ENCODE measurements at regions of chrX and their contacts with region 1.

Region 1: DNA sequence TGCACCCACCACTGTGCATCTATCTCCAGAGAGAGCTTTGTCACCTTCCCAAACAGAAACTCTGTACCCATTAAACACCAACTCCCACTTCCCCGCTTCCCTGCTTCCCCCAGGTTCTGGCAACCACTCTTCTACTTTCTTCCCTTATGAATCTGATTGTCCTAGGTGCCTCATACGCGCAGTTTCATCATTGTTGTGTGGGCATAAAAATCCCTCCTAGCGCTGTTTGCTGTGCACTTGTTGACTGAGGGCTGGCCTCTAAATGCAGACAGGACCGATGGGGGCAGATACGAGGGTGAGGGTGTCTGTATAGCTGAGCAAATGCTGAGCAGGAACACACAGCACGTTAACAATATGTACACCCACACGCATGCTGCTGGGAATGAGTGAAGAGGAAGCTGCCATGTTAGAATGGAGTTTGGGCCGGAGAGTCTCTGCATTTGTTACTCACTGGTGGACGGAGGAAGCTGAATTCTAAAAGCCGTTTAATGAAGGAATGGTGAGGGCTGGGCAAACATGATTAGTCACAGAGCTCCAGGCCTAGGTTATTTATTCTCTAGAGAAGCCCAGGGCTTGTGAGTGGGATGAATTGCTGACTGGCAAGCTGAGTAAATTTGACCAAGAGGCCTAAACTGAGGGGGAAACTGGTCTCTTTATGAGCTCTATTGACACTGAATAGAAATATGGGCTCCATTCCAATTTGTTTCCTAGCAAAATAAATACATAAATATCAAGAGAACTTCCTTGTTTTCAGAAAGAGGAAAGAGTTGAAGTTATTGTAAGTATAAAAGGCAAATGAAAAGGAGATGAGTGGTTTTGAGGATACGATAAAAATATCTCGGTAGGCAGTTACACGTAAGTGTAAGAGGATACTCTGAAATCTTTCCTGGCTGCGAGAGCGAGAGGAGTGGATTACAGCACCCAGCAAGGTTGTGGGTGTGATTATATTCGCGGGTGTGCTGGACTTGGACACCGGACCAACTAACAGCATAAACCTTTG is 95.9 kb upstream of the RPS6KA3 start:
- DNase-seq: peak; percentile 93
- ATAC-seq: peak; percentile 90
- H3K4me3 ChIP-seq: peak overlapping the region; percentile 43 to 64 (median 45)
- H3K27ac ChIP-seq: peak overlapping the region; percentile 98
- H3K4me1 ChIP-seq: peaks cover 51% of the 10 kb centered on the region
- H3K27me3 ChIP-seq: no peaks in the 10 kb centered on the region
- CTCF ChIP-seq: no peak
- EP300 ChIP-seq: peak in 1 of 2 experiments; percentile 85; a peak in 3 of 4 replicates
- POLR2A ChIP-seq: peak; percentile 57 to 63; a peak in 2 of 4 replicates
- RAD21 ChIP-seq: no peak

Region 2: GRCh38 chrX:20252381-20253231 is 110.0 kb before region 1 on chrX:
- CTCF ChIA-PET with region 1: no interaction called
- POLR2A ChIA-PET with region 1: interaction called, 15 read pairs
- in situ Hi-C with region 1: no loop called
- intact Hi-C with region 1: no loop called
- DNase-seq: peak; percentile 35
- ATAC-seq: peak; percentile 60
- H3K4me3 ChIP-seq: no peak overlapping the region
- H3K27ac ChIP-seq: peak overlapping the region; percentile 35
- H3K4me1 ChIP-seq: peaks cover 91% of the 10 kb centered on the region
- H3K27me3 ChIP-seq: no peaks in the 10 kb centered on the region
- CTCF ChIP-seq: peak; percentile 59
- EP300 ChIP-seq: no peak
- POLR2A ChIP-seq: peak in 1 of 2 experiments; percentile 7; a peak in 2 of 4 replicates
- RAD21 ChIP-seq: peak; percentile 51; the same call in 1 of the 2 replicates

Region 3: DNA sequence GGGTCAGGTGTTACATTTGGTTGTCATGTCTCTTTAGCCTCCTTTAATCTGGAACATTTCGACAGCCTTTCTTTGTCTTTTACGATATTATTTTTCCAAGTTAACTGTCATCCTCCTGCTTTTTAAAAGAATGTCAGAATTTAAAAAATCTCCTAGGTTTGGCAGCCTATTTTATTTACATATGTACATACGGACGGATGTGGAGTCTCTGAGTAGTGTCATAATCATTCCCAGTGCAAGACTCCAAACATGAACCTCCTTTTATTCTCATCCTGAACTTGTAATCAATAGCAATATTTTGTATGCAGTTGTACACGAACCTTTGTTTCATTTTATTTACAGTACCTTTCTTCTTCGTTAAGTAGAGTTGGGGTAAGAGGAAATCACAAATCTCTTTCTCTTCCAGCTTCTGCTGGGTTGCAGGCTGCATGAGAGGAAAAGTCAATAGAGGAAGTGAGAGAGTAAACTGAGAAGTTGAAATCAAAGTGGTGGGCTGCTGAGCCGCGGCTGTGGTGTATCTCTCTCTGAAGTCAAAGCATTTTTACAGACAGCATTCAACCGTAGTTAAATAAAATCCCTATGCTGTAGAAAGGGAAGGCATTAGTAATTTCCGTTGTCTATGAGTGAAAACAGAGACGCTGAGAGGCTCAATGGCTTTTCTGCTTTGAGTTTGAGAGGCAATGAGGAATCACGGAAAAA is 42.0 kb before region 1 on chrX:
- CTCF ChIA-PET with region 1: no interaction called
- POLR2A ChIA-PET with region 1: interaction called, 15 read pairs
- in situ Hi-C with region 1: no loop called
- intact Hi-C with region 1: loop called (anchors 2 kb)
- DNase-seq: peak; percentile 90
- ATAC-seq: peak; percentile 96
- H3K4me3 ChIP-seq: peak overlapping the region in 2 of 3 experiments; percentile 24 to 28; a peak in 2 of 6 replicates
- H3K27ac ChIP-seq: peak overlapping the region; percentile 79
- H3K4me1 ChIP-seq: peaks cover 66% of the 10 kb centered on the region
- H3K27me3 ChIP-seq: no peaks in the 10 kb centered on the region
- CTCF ChIP-seq: no peak
- EP300 ChIP-seq: peak in 1 of 2 experiments; percentile 92; a peak in 2 of 4 replicates
- POLR2A ChIP-seq: no peak
- RAD21 ChIP-seq: no peak

Region 4: GRCh38 chrX:20393944-20394343 is 31.4 kb after region 1 on chrX:
- CTCF ChIA-PET with region 1: no interaction called
- POLR2A ChIA-PET with region 1: interaction called, 19 read pairs
- in situ Hi-C with region 1: no loop called
- intact Hi-C with region 1: no loop called
- DNase-seq: peak; percentile 27
- ATAC-seq: peak; percentile 59
- H3K4me3 ChIP-seq: no peak overlapping the region
- H3K27ac ChIP-seq: peak overlapping the region; percentile 49
- H3K4me1 ChIP-seq: peaks cover 56% of the 10 kb centered on the region
- H3K27me3 ChIP-seq: no peaks in the 10 kb centered on the region
- CTCF ChIP-seq: no peak
- EP300 ChIP-seq: peak in 1 of 2 experiments; percentile 88; a peak in 2 of 4 replicates
- POLR2A ChIP-seq: no peak
- RAD21 ChIP-seq: no peak

Region 5: GRCh38 chrX:20471483-20471882 is 108.9 kb after region 1 on chrX:
- CTCF ChIA-PET with region 1: no interaction called
- POLR2A ChIA-PET with region 1: interaction called, 11 read pairs
- in situ Hi-C with region 1: no loop called
- intact Hi-C with region 1: loop called (anchors 1 kb)
- DNase-seq: peak; percentile 95
- ATAC-seq: peak; percentile 92
- H3K4me3 ChIP-seq: no peak overlapping the region
- H3K27ac ChIP-seq: peak overlapping the region; percentile 93
- H3K4me1 ChIP-seq: peaks cover 89% of the 10 kb centered on the region
- H3K27me3 ChIP-seq: no peaks in the 10 kb centered on the region
- CTCF ChIP-seq: no peak
- EP300 ChIP-seq: peak in 1 of 2 experiments; percentile 99; a peak in 2 of 4 replicates
- POLR2A ChIP-seq: no peak
- RAD21 ChIP-seq: no peak

Measured in HepG2 (cell line).